IMR-90 (cell line): ENCODE measurements at regions of chr2 and their contacts with region 1.

Region 1: GRCh38 chr2:150911766-150912280 is 349.8 kb downstream of the RBM43 start:
- DNase-seq: peak; percentile 95
- ATAC-seq: peak; percentile 95
- H3K4me3 ChIP-seq: peak overlapping the region; percentile 17; the same call in 1 of the 2 replicates
- H3K27ac ChIP-seq: peak overlapping the region; percentile 43
- H3K4me1 ChIP-seq: peaks cover 7% of the 10 kb centered on the region; the same call in 1 of the 2 replicates
- H3K27me3 ChIP-seq: no peaks in the 10 kb centered on the region
- CTCF ChIP-seq: peak; percentile 54
- POLR2A ChIP-seq: no peak
- RAD21 ChIP-seq: peak; percentile 69

Region 2: DNA sequence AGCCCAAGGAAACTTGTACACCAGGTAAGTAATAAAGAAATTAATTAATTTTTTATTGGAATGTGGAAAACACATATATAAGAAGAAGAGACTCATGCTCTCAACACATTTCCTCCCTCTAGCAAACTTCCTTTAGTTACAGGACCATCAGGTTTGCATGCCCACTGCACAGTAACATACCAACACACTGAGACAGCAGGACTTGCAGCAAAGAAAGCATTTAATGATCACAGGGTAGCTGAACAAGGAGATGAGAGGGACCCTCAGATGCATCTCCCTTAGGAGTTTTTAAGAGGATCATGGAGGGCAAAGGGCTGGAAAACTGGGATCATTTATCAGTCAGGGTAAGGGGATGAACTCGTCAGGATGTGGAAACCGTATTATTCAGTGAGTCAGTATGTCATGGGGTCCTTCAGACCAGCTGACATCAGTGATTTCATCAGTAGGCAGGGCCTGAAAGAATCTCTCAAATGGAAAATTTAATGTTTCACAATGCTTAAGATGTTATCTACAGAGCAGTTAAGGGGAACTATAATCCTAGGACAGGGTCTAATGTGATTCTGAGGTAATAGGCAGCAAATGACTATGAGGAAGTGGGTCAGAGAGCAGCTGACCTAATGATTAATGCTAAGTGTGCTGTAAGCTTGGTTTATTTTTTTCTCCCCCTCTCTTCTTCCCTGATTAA is 230.6 kb before region 1 on chr2:
- CTCF ChIA-PET with region 1: no interaction called
- POLR2A ChIA-PET with region 1: no interaction called
- dilution Hi-C with region 1: no loop called
- in situ Hi-C with region 1: no loop called
- intact Hi-C with region 1: loop called (anchors 5 kb)
- DNase-seq: peak; percentile 97
- ATAC-seq: peak; percentile 83
- H3K4me3 ChIP-seq: no peak overlapping the region
- H3K27ac ChIP-seq: peak overlapping the region; percentile 81
- H3K4me1 ChIP-seq: peaks cover 7% of the 10 kb centered on the region; the same call in 1 of the 2 replicates
- H3K27me3 ChIP-seq: no peaks in the 10 kb centered on the region
- CTCF ChIP-seq: no peak
- POLR2A ChIP-seq: no peak
- RAD21 ChIP-seq: peak; percentile 16; the same call in 1 of the 2 replicates